ENCODE measurements at regions of chr3 and their contacts with region 1.

Region 1: DNA sequence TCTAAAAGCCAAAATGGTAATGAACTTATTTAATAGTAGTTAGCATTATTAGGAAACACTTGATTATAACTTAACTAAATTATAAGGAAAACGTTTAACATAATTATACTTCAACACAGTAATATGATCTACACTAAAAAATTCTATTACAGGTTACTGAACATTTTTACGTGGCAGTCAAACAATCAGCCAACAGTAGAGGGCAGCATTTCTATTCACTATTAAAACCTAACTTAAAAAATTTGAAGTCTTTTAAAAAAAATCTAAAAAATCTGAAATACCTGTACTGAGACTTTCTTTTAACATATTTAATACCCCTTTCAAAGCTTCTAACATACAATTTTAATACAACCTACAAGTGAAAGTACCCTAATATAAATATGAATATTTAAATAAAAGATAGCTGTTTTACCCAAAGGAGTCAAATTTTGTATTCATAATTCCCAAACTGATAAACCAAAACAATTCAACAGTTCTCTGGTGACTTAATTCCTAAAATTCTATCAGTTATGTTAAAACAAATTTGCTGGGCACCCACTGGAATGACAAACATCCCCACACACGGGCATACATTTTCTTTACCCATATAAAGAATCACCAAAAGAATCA is 41.5 kb downstream of the DLG1 start:
- DNase-seq: peak; percentile 67
- H3K4me3 Mint-ChIP-seq: no peak overlapping the region
- H3K27ac Mint-ChIP-seq: no peak overlapping the region
- H3K4me1 Mint-ChIP-seq: peaks cover 64% of the 10 kb centered on the region
- H3K27me3 Mint-ChIP-seq: no peaks in the 10 kb centered on the region

Region 2: GRCh38 chr3:196688349-196688748 is 568.6 kb before region 1 on chr3:
- CTCF ChIA-PET with region 1: no interaction called
- intact Hi-C with region 1: no loop called
- DNase-seq: no peak
- H3K4me3 Mint-ChIP-seq: no peak overlapping the region
- H3K27ac Mint-ChIP-seq: no peak overlapping the region
- H3K4me1 Mint-ChIP-seq: peaks cover 12% of the 10 kb centered on the region
- H3K27me3 Mint-ChIP-seq: no peaks in the 10 kb centered on the region

Region 3: DNA sequence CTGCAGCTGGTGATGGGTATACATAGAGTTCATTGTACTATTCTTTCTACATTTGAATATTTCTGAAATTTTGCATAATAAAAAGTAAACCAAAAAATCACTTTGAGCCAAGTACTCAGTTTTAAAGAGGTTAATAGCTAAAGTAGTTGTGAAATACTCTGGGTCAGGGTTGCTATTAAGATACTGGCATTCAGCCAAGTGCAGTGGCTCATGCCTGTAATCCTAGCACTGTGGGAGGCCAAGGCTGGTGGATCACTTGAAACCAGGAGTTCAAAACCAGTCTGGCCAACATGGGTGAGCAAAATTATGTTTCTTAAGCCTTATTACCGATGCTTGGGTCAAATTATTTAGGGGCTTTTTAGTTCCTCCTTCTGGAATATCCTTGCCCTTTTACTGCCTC is 105.4 kb before region 1 on chr3:
- CTCF ChIA-PET with region 1: no interaction called
- intact Hi-C with region 1: no loop called
- DNase-seq: no peak
- H3K4me3 Mint-ChIP-seq: no peak overlapping the region
- H3K27ac Mint-ChIP-seq: no peak overlapping the region
- H3K4me1 Mint-ChIP-seq: peaks cover 5% of the 10 kb centered on the region
- H3K27me3 Mint-ChIP-seq: no peaks in the 10 kb centered on the region

Region 4: DNA sequence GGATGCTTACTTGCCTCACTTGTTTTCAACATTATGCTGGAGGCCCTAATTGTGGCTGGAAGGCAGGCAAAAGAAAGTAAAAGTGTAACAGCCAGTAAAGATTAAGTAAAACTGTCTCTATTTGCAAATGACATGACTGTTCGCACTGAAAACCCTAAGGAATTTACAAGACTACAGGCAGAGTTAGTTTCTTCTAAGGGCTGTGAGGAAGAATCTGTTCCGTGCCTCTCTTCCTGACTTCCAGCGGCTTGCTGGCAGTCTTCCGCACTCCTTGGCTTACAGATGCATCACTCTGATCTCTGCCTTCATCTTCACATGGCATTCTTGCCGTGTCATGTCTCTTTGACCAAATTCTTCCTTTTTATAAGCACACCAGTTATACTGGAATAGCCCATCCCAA is 44.6 kb before region 1 on chr3:
- CTCF ChIA-PET with region 1: no interaction called
- intact Hi-C with region 1: no loop called
- DNase-seq: no peak
- H3K4me3 Mint-ChIP-seq: no peak overlapping the region
- H3K27ac Mint-ChIP-seq: no peak overlapping the region
- H3K4me1 Mint-ChIP-seq: peaks cover 41% of the 10 kb centered on the region
- H3K27me3 Mint-ChIP-seq: no peaks in the 10 kb centered on the region

Region 5: DNA sequence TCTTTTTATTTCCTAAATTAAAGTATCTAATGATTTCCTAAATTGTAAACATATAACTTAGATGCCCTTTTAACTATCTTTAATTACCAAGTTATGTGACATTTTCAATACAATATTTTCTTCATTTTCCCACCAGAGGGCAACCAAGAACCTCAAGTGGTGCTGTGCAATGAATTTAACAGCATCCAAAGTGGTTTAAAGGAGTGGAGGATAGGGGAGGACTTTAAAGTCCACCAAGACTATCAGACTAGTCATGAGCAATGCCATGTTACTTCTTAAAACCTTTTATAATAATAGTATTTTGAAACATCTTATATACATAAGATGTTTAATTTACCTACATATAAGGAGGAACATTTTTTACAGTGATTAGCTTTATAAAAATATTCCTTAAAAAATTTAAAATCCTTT is 32.9 kb before region 1 on chr3:
- CTCF ChIA-PET with region 1: interaction called, 24 read pairs
- intact Hi-C with region 1: no loop called
- DNase-seq: no peak
- H3K4me3 Mint-ChIP-seq: no peak overlapping the region
- H3K27ac Mint-ChIP-seq: no peak overlapping the region
- H3K4me1 Mint-ChIP-seq: peaks cover 37% of the 10 kb centered on the region
- H3K27me3 Mint-ChIP-seq: no peaks in the 10 kb centered on the region

Region 6: GRCh38 chr3:197244751-197245150 is 12.2 kb before region 1 on chr3:
- CTCF ChIA-PET with region 1: interaction called, 10 read pairs
- intact Hi-C with region 1: no loop called
- DNase-seq: no peak
- H3K4me3 Mint-ChIP-seq: no peak overlapping the region
- H3K27ac Mint-ChIP-seq: no peak overlapping the region
- H3K4me1 Mint-ChIP-seq: peaks cover 20% of the 10 kb centered on the region
- H3K27me3 Mint-ChIP-seq: no peaks in the 10 kb centered on the region

Region 7: GRCh38 chr3:197298341-197298857 is 41.5 kb after region 1 on chr3 and contains the start of gene DLG1:
- CTCF ChIA-PET with region 1: interaction called, 5 read pairs
- intact Hi-C with region 1: loop called (anchors 2 kb)
- DNase-seq: peak; percentile 93
- H3K4me3 Mint-ChIP-seq: peak within 1 kb of the TSS; percentile 96
- H3K27ac Mint-ChIP-seq: peak within 1 kb of the TSS; percentile 86
- H3K4me1 Mint-ChIP-seq: peaks cover 16% of the 10 kb centered on the region
- H3K27me3 Mint-ChIP-seq: peaks cover 16% of the 10 kb centered on the region
- total RNA-seq, gene DLG1: 51.9 to 55.2 TPM

Region 8: DNA sequence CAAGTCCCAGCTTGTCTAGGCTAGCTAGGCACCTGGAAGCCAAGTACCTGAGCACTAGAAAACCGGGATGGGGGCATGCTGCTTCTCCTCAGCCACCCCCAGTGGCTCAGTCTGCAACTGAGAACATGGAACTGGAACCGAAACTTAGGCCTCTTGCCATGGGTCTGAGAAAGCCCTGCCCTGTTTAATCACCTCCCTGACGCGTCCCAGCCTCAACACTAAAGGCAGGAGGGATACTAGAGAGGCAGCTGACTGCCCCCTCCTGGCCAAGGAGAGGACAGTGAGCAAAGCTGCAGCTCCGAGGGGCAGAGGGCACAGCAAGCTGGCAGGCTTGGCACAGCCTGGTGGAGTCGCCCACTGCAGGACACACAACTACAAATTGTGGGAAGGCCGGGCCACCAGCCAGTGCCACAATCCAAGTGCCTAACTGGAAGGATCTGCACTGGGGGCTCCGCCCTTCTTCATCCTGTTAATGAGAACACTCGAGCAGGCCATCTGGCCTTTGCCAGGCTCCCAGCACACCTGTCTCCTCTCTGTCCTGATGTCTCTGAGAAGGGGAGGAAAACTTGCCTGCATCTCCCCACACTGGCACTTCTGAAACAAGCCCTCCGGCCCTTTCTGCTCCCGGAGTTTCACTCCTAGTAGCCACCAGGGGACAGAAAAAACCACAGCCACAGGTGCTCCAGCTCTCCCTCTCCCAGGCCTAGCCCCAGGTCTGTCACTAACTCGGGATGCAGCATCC is 245.1 kb after region 1 on chr3:
- CTCF ChIA-PET with region 1: interaction called, 27 read pairs
- intact Hi-C with region 1: loop called (anchors 2 kb)
- DNase-seq: peak; percentile 73
- H3K4me3 Mint-ChIP-seq: no peak overlapping the region
- H3K27ac Mint-ChIP-seq: no peak overlapping the region
- H3K4me1 Mint-ChIP-seq: no peaks in the 10 kb centered on the region
- H3K27me3 Mint-ChIP-seq: no peaks in the 10 kb centered on the region

Region 9: DNA sequence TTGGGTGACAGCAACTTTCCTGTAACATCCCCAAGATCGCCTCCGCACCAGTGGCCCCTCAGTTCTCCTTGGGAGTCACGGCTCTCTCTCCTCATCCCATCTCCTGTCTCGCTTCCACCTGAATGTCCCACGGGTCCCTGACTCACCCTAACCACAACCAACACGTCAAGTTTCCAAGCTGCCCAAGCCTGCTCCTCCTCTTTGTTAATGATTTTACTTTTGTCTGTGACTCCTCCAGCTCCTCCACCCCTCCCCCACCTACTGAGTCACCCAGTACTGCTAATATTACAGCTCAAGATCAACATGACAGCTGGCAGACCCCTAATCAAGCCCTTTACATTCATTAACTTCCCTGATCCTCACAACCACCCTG is 259.6 kb after region 1 on chr3:
- CTCF ChIA-PET with region 1: interaction called, 12 read pairs
- intact Hi-C with region 1: no loop called
- DNase-seq: peak; percentile 69
- H3K4me3 Mint-ChIP-seq: no peak overlapping the region
- H3K27ac Mint-ChIP-seq: peak overlapping the region; percentile 87
- H3K4me1 Mint-ChIP-seq: peaks cover 12% of the 10 kb centered on the region
- H3K27me3 Mint-ChIP-seq: no peaks in the 10 kb centered on the region